Activated naive CD4-positive, alpha-beta T cell treated with anti-CD3 and anti-CD28 coated beads, Interleukin-2, amount 10 ng/mL, durations not matched to agents 7 days and 5 days (primary cell): ENCODE measurements at regions of chr1 and their contacts with region 1.

Region 1: DNA sequence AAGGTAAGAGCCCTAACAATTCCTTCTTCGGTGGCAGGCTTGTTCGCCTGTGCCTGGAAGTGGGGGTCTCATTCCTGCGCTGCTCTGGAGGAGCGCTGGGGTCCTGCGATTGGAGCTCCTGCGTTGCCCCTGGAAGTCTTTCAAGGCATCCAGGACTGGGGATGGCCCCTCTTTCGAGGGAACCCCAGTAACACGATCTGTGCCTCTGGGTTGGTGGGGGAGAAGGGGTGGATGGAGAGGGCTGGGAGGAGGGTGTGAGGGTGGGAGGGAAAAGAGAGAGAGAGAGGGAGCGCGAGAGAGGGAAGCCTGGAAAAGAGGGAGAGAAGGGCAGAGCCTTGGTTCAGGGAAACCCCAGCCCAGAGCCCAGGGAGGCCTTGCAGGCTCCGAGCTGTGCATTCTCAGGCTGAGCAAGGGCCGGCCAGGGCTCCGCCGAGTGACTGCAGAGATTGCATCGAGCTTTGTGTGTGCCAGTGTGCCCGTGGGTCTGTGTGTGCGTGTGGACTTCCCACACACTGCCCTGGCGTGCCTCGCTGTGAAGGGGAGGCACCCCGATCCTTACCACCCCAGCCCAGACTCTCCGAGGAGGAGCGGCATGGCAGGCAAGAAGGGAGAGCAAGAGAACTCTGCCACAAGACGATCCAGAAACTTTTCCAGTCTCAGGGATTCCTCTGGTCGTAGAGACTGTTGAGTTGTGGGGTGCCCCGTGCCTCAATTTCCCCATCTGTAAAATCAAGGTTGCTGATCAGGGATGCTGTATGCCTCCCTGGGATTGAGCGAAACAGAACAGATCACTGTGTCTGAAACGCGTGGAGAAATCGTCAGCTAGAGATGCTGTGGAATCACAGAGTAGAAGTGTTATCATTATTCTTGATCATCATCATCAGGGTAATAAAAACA is 619 bp downstream of the BCL9 start:
- DNase-seq: peak; percentile 39
- H3K4me3 Mint-ChIP-seq: no peak overlapping the region
- H3K27ac Mint-ChIP-seq: no peak overlapping the region
- H3K4me1 Mint-ChIP-seq: peaks cover 6% of the 10 kb centered on the region
- H3K27me3 Mint-ChIP-seq: peaks cover 8% of the 10 kb centered on the region

Region 2: DNA sequence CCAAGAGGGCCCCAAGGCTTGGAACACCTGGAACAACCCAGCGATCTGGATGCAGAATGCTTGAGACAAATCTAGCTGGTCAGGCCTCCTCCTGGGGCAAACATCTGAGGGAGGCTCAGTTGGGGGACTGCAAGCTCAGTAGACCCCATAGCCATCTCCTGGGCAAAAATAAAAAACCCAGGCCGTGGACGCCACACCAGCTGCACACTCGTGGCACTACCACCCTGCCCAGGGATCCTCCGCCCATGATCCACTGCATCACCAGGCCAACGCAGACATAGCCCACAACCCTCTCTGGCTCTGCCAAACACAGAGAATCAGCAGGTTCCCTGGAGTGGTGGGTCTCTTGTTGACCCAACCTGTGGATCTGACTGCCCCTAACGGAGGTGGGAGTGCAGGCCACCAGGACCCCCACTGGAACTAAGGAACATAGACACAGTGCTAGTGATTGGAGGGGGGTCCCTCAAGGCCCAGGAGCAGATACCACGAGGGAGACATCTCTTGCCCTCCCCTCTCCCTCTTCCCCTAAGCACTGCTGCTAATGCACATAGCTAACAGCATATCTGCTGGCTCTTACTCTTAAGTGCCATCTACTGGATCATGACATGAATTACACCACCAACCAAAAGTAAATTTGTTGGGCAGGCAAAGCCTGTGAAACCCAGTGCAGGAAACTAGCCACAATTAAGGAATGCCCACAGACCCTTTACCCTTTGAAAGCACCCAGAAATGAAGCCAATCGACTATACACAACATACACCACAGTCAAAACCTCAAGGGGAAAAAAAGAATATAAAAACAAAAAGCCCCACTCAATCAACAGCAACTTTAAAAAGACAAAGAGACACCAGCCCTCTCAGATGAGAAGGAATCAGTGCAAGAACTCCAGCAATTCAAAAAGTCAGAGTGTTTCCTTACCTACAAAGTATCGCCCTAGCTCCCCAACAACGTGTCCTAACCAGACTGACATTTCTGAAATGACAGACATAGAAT is 152.1 kb before region 1 on chr1:
- CTCF ChIA-PET with region 1: no interaction called
- DNase-seq: no peak
- H3K4me3 Mint-ChIP-seq: no peak overlapping the region
- H3K27ac Mint-ChIP-seq: no peak overlapping the region
- H3K4me1 Mint-ChIP-seq: no peaks in the 10 kb centered on the region
- H3K27me3 Mint-ChIP-seq: peaks cover 21% of the 10 kb centered on the region

Region 3: DNA sequence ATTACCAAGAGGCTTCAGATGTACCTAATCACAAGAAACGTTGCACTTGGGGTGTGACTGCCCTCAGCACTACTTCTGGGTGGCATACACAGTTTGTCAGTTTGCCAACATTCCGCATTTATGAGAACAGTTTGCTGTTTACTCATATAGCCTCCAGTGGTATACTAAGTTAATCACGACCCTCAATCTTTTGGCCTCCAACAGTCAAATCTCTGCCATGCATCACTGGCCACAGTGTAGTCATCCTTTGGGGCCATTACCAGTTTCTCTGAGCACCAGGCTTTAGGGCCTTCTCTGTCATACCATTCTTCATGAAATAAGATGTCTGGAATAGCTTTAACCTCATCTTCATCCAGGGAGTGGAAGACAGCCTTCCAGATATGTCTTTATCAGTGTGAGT is 63.4 kb before region 1 on chr1:
- CTCF ChIA-PET with region 1: no interaction called
- DNase-seq: no peak
- H3K4me3 Mint-ChIP-seq: no peak overlapping the region
- H3K27ac Mint-ChIP-seq: no peak overlapping the region
- H3K4me1 Mint-ChIP-seq: no peaks in the 10 kb centered on the region
- H3K27me3 Mint-ChIP-seq: peaks cover 13% of the 10 kb centered on the region

Region 4: GRCh38 chr1:147527941-147528936 is 13.7 kb before region 1 on chr1:
- CTCF ChIA-PET with region 1: interaction called, 16 read pairs
- DNase-seq: peak; percentile 33
- H3K4me3 Mint-ChIP-seq: no peak overlapping the region
- H3K27ac Mint-ChIP-seq: no peak overlapping the region
- H3K4me1 Mint-ChIP-seq: no peaks in the 10 kb centered on the region
- H3K27me3 Mint-ChIP-seq: peaks cover 12% of the 10 kb centered on the region